H1 (cell line): ENCODE measurements at regions of chr4 and their contacts with region 1.

Region 1: DNA sequence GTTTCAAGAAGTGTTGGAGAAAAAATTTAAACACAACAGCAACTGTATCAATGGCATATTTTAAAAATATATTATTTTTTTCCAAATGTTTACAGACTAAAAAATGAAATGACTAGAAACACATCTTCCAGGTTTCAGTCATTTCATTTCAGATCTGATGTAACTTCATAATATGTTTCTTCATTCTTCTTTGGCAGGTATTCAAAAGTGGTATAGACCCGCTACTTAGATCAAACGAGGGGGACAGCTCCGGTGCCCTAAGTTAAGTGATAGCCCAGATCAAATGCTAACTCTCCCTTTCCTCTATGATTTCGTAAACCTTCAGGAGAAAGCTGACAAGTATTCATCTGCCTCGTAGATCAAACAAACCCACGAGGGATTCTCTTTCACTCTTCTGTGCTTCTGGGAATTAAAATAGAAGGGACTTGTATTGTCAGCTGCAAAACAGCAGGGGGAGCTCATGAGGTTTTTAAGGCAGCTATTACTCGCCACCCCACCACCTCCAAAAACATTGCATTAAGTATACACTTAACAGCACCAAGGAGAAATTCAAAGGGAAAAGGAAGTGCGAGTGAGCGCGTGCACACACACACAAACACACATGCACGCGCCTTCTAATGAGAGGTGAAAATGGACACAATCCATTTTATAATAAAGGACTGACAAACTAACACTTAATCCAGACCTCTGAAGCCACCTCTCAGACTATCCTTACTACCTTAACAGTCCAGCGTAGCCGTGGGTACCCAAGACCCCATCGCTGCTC is 21.4 kb downstream of the HELT start:
- DNase-seq: peak in 1 of 2 experiments; percentile 70
- H3K4me3 ChIP-seq: no peak overlapping the region
- H3K27ac ChIP-seq: no peak overlapping the region
- H3K4me1 ChIP-seq: no peaks in the 10 kb centered on the region; a peak in 1 of 7 replicates
- H3K27me3 ChIP-seq: peaks cover 0 to 2% (median 0%) of the 10 kb centered on the region in 4 experiments; a peak in 2 of 7 replicates
- CTCF ChIP-seq: peak in 2 of 3 experiments; percentile 72 to 83; a peak in 3 of 4 replicates
- EP300 ChIP-seq: no peak
- POLR2A ChIP-seq: no peak
- RAD21 ChIP-seq: peak; percentile 85

Region 2: GRCh38 chr4:185054876-185055275 is 15.2 kb after region 1 on chr4:
- CTCF ChIA-PET with region 1: interaction called, 15 read pairs
- POLR2A ChIA-PET with region 1: no interaction called
- DNase-seq: no peak
- H3K4me3 ChIP-seq: peak overlapping the region in 1 of 4 experiments; percentile 25; a peak in 2 of 8 replicates
- H3K27ac ChIP-seq: no peak overlapping the region
- H3K4me1 ChIP-seq: peaks cover 3 to 14% (median 8%) of the 10 kb centered on the region in 4 experiments; a peak in 5 of 7 replicates
- H3K27me3 ChIP-seq: no peaks in the 10 kb centered on the region
- CTCF ChIP-seq: no peak
- EP300 ChIP-seq: no peak
- POLR2A ChIP-seq: no peak
- RAD21 ChIP-seq: no peak

Region 3: GRCh38 chr4:185082561-185082960 is 42.9 kb after region 1 on chr4:
- CTCF ChIA-PET with region 1: interaction called, 12 read pairs
- POLR2A ChIA-PET with region 1: no interaction called
- DNase-seq: no peak
- H3K4me3 ChIP-seq: no peak overlapping the region
- H3K27ac ChIP-seq: no peak overlapping the region
- H3K4me1 ChIP-seq: peaks cover 2 to 39% (median 9%) of the 10 kb centered on the region in 4 experiments; a peak in 6 of 7 replicates
- H3K27me3 ChIP-seq: no peaks in the 10 kb centered on the region
- CTCF ChIP-seq: no peak
- EP300 ChIP-seq: no peak
- POLR2A ChIP-seq: no peak
- RAD21 ChIP-seq: no peak

Region 4: DNA sequence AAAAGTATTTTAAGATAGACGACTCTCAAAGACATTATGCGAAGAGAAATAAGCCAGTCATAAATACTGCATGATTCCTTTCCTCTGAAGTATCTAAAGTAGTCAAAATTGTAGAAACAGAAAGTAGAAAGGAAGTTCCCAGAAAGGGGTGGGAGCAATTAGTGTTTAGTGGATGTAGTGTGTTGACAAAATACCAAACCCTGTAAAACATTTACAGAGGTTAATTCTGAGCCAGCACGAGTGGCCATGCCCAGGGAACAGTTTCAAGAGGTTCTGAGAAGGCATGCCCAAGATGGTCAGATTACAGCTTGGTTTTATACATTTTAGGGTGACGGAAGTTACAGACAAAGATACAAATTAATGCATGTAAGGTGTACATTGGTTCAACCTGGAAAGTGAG is 69.0 kb after region 1 on chr4:
- CTCF ChIA-PET with region 1: interaction called, 10 read pairs
- POLR2A ChIA-PET with region 1: no interaction called
- DNase-seq: no peak
- H3K4me3 ChIP-seq: peak overlapping the region in 1 of 4 experiments; percentile 28; a peak in 1 of 8 replicates
- H3K27ac ChIP-seq: peak overlapping the region; percentile 37; the same call in 1 of the 2 replicates
- H3K4me1 ChIP-seq: peaks cover 6 to 26% (median 13%) of the 10 kb centered on the region in 4 experiments
- H3K27me3 ChIP-seq: no peaks in the 10 kb centered on the region
- CTCF ChIP-seq: no peak
- EP300 ChIP-seq: no peak
- POLR2A ChIP-seq: no peak
- RAD21 ChIP-seq: no peak

Region 5: GRCh38 chr4:185142912-185143595 is 103.4 kb after region 1 on chr4 and contains the start of gene SLC25A4:
- CTCF ChIA-PET with region 1: interaction called, 167 read pairs
- POLR2A ChIA-PET with region 1: interaction called, 3 read pairs
- DNase-seq: peak in 1 of 2 experiments; percentile 92
- H3K4me3 ChIP-seq: peak within 1 kb of the TSS; percentile 75 to 99 (median 80)
- H3K27ac ChIP-seq: no peak within 1 kb of the TSS
- H3K4me1 ChIP-seq: peaks cover 0 to 9% (median 6%) of the 10 kb centered on the region in 4 experiments; a peak in 5 of 7 replicates
- H3K27me3 ChIP-seq: no peaks in the 10 kb centered on the region; a peak in 1 of 7 replicates
- CTCF ChIP-seq: peak; percentile 36 to 45 (median 41)
- EP300 ChIP-seq: no peak
- POLR2A ChIP-seq: peak; percentile 93 to 98
- RAD21 ChIP-seq: no peak; a peak in 1 of 4 replicates
- total RNA-seq, gene SLC25A4: 42.0 TPM in 2 replicates